ENCODE measurements at regions of chr17 and their contacts with region 1.

Region 1: DNA sequence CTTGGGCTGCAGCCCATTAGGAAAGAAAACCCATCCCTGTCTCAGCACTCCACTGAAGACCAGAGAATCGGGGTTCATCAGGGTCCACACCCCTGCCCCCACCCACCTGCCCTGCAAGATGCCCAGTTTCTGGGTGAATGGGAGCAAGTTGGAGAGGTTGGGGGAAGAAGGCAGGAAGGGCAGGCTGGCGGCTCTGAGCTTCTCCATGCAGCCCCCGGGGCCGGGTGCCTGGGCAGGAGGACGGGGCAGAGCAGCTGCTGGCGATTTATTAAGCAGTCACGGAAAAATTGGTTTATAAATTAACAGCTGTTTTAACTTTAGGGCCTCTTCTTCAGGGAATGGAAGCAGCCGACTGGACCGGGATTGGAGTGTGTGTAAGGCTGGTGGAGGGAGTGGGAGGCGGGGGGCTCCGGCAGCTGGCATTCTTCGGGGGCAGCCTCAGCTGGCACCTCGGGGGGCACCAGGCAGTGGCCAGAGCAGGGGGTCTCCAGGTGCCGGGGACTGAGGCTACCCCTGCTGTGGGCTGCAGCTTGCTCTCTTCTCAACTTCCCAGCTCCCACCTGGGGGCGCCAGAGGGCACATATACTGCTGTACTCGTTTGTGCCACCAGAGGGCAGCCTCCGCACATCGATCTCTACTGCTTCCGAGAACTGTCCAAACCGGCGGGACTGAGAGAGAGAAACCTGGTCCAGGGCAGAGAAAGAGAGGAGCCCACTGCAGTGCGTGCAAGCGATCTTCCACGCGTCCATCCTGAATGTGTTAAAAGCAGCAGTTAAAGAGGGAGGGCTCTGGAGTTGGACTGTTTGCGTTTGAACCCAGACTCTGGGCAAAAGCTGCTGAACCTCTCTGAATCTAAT is 5.0 kb upstream of the PPP1R1B start:
- DNase-seq: peak; percentile 56
- ATAC-seq: peak; percentile 79
- H3K4me3 ChIP-seq: peak overlapping the region; percentile 46; the same call in 1 of the 2 replicates
- H3K27ac ChIP-seq: no peak overlapping the region
- H3K4me1 ChIP-seq: peaks cover 5% of the 10 kb centered on the region
- H3K27me3 ChIP-seq: peaks cover 3 to 5% of the 10 kb centered on the region in 2 experiments
- CTCF ChIP-seq: peak; percentile 100; a peak in 5 of 6 replicates
- EP300 ChIP-seq: no peak
- POLR2A ChIP-seq: no peak
- RAD21 ChIP-seq: peak; percentile 95

Region 2: GRCh38 chr17:39443326-39443725 is 178.4 kb before region 1 on chr17:
- CTCF ChIA-PET with region 1: no interaction called
- POLR2A ChIA-PET with region 1: no interaction called
- RAD21 ChIA-PET with region 1: no interaction called
- SMC1A ChIA-PET with region 1: no interaction called
- in situ Hi-C with region 1: no loop called
- intact Hi-C with region 1: no loop called
- DNase-seq: no peak
- ATAC-seq: no peak
- H3K4me3 ChIP-seq: no peak overlapping the region
- H3K27ac ChIP-seq: no peak overlapping the region
- H3K4me1 ChIP-seq: no peaks in the 10 kb centered on the region
- H3K27me3 ChIP-seq: no peaks in the 10 kb centered on the region
- CTCF ChIP-seq: no peak
- EP300 ChIP-seq: no peak
- POLR2A ChIP-seq: no peak
- RAD21 ChIP-seq: no peak

Region 3: DNA sequence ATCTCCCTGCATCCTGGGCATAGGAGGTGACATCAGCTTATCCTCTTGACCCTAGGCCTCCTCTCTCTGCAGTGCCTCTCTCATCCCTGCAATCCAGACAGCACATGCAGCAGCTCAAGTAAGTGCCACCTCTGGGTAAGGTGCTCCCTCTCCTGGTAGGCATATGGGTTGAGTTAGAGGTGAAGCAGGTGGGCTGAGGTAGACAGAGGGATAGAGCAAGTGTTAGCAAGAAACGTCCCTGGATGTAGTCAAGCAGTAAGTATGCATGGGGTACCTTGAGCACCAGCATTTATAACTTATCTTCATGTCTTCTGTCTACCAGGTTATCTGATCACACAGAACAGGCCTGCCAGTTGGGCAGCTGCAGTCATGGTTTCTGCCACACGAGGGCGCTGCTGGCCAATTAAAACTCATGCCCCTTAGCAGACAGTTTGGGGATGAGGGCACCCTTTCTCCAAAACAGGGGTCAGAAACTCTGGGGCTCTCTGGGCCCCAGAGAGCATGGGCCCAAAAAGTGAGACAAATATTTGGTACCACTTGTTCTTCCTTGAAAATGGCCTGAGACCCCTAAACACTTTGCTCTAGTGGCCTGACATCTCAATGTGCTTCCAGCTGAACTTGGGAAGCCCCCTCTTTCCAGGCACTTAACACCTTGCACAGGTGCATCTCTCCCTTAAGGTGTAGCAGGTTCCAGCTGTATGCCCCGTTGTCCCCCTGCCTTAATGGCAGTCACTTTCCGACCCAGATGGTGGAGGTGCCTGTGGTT is 73.9 kb before region 1 on chr17:
- CTCF ChIA-PET with region 1: interaction called, 64 read pairs
- POLR2A ChIA-PET with region 1: interaction called, 3 read pairs
- RAD21 ChIA-PET with region 1: interaction called, 54 read pairs
- SMC1A ChIA-PET with region 1: interaction called, 36 read pairs
- in situ Hi-C with region 1: no loop called
- intact Hi-C with region 1: loop called (anchors 1 kb)
- DNase-seq: peak; percentile 31
- ATAC-seq: peak; percentile 97
- H3K4me3 ChIP-seq: no peak overlapping the region
- H3K27ac ChIP-seq: no peak overlapping the region
- H3K4me1 ChIP-seq: no peaks in the 10 kb centered on the region
- H3K27me3 ChIP-seq: no peaks in the 10 kb centered on the region
- CTCF ChIP-seq: peak; percentile 80 to 98 (median 84)
- EP300 ChIP-seq: no peak
- POLR2A ChIP-seq: no peak
- RAD21 ChIP-seq: peak; percentile 83

Region 4: GRCh38 chr17:39668199-39668966 is 46.6 kb after region 1 on chr17 and contains the start of gene PNMT:
- CTCF ChIA-PET with region 1: interaction called, 114 read pairs
- POLR2A ChIA-PET with region 1: no interaction called
- RAD21 ChIA-PET with region 1: interaction called, 14 read pairs
- SMC1A ChIA-PET with region 1: interaction called, 10 read pairs
- in situ Hi-C with region 1: no loop called
- intact Hi-C with region 1: no loop called
- DNase-seq: no peak
- ATAC-seq: peak; percentile 82
- H3K4me3 ChIP-seq: peak within 1 kb of the TSS; percentile 44; the same call in 1 of the 2 replicates
- H3K27ac ChIP-seq: no peak within 1 kb of the TSS
- H3K4me1 ChIP-seq: no peaks in the 10 kb centered on the region
- H3K27me3 ChIP-seq: peaks cover 4 to 6% of the 10 kb centered on the region in 2 experiments; a peak in 3 of 4 replicates
- CTCF ChIP-seq: peak; percentile 57 to 73 (median 62)
- EP300 ChIP-seq: no peak
- POLR2A ChIP-seq: no peak
- RAD21 ChIP-seq: 0 out of 2 replicates have a peak, but pooled peaks have one; percentile 17
- polyA plus RNA-seq, gene PNMT: not detected

Region 5: GRCh38 chr17:39719563-39720355 is 98.0 kb after region 1 on chr17:
- CTCF ChIA-PET with region 1: interaction called, 11 read pairs
- POLR2A ChIA-PET with region 1: no interaction called
- RAD21 ChIA-PET with region 1: interaction called, 6 read pairs
- SMC1A ChIA-PET with region 1: no interaction called
- in situ Hi-C with region 1: no loop called
- intact Hi-C with region 1: no loop called
- DNase-seq: no peak
- ATAC-seq: no peak
- H3K4me3 ChIP-seq: no peak overlapping the region
- H3K27ac ChIP-seq: no peak overlapping the region
- H3K4me1 ChIP-seq: no peaks in the 10 kb centered on the region
- H3K27me3 ChIP-seq: no peaks in the 10 kb centered on the region
- CTCF ChIP-seq: no peak
- EP300 ChIP-seq: no peak
- POLR2A ChIP-seq: no peak
- RAD21 ChIP-seq: no peak

Region 6: DNA sequence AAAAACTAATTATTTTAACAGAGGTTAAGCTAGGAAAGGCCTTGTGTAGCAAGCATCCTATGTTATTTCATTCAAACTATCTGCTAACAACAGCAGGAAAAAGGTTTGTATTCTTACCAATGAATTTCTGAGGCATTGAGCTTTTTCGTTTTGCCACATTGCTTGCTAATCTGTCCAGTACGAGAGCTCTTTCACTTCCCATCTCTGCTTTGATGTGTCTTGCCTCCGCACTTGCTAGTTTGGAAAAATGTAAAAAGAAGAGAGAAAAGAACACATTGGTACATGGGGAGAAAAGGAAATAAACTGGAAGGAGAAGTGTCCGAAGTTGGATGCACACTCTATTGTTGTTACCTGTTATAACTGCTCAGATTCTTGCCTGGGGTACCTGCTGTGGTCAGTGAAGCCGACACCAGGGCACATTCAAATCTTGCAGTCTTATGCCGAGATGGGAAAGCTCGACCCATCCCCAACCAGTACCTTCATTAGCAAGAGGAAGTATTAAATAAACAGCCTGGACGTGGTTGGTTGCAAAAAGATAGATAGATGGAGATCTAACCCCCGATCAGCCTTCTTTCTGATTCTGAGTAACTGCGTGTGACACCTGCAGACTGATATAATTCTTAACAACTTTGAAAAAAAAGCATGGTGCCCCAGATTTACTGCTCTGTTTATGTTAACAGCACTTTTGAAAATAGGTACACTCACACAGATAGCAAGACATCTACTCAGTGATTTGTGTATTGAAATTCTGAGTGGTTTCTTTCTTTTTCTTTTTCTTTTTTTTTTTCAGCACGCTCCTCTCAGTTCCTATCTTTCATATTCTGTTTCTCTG is 156.0 kb after region 1 on chr17:
- CTCF ChIA-PET with region 1: interaction called, 13 read pairs
- POLR2A ChIA-PET with region 1: no interaction called
- RAD21 ChIA-PET with region 1: interaction called, 7 read pairs
- SMC1A ChIA-PET with region 1: no interaction called
- in situ Hi-C with region 1: no loop called
- intact Hi-C with region 1: no loop called
- DNase-seq: peak; percentile 73
- ATAC-seq: peak; percentile 68
- H3K4me3 ChIP-seq: peak overlapping the region; percentile 79
- H3K27ac ChIP-seq: peak overlapping the region; percentile 95
- H3K4me1 ChIP-seq: peaks cover 44% of the 10 kb centered on the region
- H3K27me3 ChIP-seq: no peaks in the 10 kb centered on the region
- CTCF ChIP-seq: no peak
- EP300 ChIP-seq: peak; percentile 40 to 58; a peak in 2 of 4 replicates
- POLR2A ChIP-seq: peak; percentile 43; the same call in 1 of the 2 replicates
- RAD21 ChIP-seq: no peak

Region 7: DNA sequence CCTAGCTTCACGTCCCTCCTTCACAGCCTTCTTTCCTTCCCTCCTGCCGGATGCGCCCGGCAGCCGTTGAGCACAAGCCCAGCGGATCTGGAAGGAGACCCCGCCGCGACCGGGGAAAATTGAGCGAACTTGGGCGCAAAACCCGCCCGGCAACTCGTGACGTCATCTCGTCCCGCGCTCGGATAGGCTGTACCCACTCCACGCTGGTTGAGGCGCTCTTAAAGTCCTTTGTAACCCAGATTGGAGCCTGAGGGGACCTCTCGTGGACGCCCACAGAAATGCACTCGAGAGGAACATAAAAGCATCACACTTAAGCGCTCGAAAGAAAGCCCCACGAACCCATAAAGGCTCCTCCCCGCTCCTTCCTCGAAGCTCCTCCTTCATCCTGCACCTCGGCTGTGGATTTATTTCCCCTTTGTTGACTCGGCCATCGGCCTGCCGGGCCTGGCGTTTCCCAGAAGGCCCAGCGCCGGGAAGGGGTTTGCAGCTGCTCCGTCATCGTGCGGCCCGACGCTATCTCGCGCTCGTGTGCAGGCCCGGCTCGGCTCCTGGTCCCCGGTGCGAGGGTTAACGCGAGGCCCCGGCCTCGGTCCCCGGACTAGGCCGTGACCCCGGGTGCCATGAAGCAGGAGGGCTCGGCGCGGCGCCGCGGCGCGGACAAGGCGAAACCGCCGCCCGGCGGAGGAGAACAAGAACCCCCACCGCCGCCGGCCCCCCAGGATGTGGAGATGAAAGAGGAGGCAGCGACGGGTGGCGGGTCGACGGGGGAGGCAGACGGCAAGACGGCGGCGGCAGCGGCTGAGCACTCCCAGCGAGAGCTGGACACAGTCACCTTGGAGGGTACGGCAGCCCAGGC is 358.8 kb after region 1 on chr17 and contains the start of gene PSMD3:
- CTCF ChIA-PET with region 1: interaction called, 54 read pairs
- POLR2A ChIA-PET with region 1: no interaction called
- RAD21 ChIA-PET with region 1: interaction called, 7 read pairs
- SMC1A ChIA-PET with region 1: interaction called, 10 read pairs
- in situ Hi-C with region 1: loop called (anchors 5 kb)
- intact Hi-C with region 1: loop called (anchors 1 kb)
- DNase-seq: peak; percentile 100
- ATAC-seq: peak; percentile 94
- H3K4me3 ChIP-seq: peak within 1 kb of the TSS; percentile 90
- H3K27ac ChIP-seq: peak within 1 kb of the TSS; percentile 90
- H3K4me1 ChIP-seq: peaks cover 6% of the 10 kb centered on the region
- H3K27me3 ChIP-seq: no peaks in the 10 kb centered on the region; a peak in 1 of 4 replicates
- CTCF ChIP-seq: peak; percentile 80 to 97 (median 92)
- EP300 ChIP-seq: peak; percentile 21 to 44; a peak in 1 of 4 replicates
- POLR2A ChIP-seq: peak; percentile 93
- RAD21 ChIP-seq: peak; percentile 92
- polyA plus RNA-seq, gene PSMD3: 2.2 to 2.6 TPM

Measured in GM12878 (cell line).